ENCODE measurements at regions of chr17 and their contacts with region 1.

Region 1: DNA sequence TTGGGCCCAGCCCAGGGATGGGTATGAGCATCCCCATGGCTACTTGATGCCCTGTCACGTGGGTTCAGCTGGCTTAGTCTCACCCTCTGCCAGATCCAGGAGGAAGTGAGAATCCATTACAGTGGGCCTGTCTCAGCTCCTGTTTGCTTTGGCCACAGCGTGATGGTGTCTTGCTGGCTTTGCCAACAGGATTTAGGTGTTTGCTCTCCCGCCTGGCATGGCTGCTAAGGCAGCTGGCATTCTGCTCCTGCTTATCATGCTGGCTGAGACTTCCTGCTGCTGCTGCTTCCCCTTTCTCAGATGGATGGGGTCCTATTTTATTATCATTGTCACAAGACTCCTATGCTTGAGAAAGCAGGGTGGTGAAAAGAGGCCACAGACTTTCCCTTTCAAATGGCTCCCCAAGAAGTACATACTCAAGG is 28.3 kb upstream of the HOXB13 start:
- DNase-seq: peak; percentile 13
- H3K4me3 ChIP-seq: no peak overlapping the region
- H3K27ac ChIP-seq: no peak overlapping the region
- H3K4me1 ChIP-seq: peaks cover 18% of the 10 kb centered on the region
- H3K27me3 ChIP-seq: peaks cover 41 to 42% of the 10 kb centered on the region in 2 experiments
- CTCF ChIP-seq: no peak
- POLR2A ChIP-seq: no peak

Region 2: DNA sequence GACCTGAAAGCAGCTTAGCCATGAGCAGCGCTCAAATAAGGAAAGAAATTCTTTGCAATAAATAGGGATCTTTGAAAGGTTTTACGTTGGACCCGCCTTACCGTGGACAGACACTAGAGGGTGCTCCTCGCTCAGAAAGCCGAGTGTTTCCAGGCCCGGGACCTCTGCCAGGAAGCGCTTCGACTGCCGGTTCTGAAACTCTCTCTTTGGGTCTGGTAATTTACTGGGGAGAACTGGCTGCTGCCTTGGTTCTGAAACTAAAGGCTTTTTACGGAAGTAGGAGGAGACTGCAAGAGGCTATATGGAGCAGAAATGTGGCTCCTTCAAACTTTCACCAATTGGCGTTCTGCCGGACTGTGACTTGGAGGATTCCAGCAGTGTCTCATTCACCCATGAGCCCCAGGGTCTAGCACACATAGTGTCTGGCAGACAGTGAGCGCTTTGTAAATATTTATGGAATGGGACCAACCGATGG is 85.1 kb before region 1 on chr17:
- CTCF ChIA-PET with region 1: interaction called, 4 read pairs
- POLR2A ChIA-PET with region 1: no interaction called
- dilution Hi-C with region 1: loop called (anchors 25 kb)
- intact Hi-C with region 1: no loop called
- DNase-seq: peak; percentile 77
- H3K4me3 ChIP-seq: peak overlapping the region in 1 of 3 experiments; percentile 43
- H3K27ac ChIP-seq: no peak overlapping the region
- H3K4me1 ChIP-seq: no peaks in the 10 kb centered on the region
- H3K27me3 ChIP-seq: peaks cover 12 to 21% of the 10 kb centered on the region in 2 experiments
- CTCF ChIP-seq: peak; percentile 79 to 88
- POLR2A ChIP-seq: no peak